GM13976 (cell line): ENCODE measurements at regions of chr7 and their contacts with region 1.

Region 1: DNA sequence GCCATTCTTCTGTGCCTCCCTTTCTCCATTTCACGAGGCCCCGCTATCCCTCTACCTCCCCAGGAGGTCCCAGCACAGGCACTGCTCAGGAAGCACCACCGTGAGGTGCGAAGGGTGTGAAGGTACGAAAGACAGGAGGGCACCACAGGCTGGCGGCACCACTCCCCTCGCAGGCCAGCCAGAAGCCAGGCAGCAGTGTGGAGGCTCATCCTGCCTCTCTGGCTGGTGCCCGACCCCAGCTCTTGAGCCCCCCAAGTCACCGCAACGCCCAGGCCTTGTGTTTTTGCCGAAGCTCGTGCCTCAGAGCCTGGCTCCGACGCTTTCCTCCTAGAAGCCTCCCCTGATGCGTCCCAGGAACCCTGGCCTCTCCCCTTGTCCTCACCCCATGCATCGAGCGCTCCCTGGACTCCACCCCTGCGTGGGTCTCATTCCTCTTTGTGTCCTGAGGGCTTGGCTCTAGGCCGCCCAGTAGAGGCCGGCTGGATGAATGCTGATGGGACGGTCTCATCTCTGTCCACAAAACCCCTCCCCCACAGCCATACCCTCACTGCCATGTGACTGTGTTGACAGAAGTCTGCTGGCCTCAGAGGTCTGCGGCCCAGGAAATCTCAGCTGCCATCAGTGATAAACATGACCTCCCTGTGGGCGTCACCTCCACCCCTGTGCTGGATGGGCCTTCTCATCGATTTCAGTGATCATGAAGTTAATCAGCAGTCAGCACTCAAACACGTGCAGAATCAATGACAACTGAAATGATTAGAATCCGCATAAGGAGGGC is 19.3 kb downstream of the BRI3 start:
- DNase-seq: no peak
- CTCF ChIP-seq: no peak

Region 2: DNA sequence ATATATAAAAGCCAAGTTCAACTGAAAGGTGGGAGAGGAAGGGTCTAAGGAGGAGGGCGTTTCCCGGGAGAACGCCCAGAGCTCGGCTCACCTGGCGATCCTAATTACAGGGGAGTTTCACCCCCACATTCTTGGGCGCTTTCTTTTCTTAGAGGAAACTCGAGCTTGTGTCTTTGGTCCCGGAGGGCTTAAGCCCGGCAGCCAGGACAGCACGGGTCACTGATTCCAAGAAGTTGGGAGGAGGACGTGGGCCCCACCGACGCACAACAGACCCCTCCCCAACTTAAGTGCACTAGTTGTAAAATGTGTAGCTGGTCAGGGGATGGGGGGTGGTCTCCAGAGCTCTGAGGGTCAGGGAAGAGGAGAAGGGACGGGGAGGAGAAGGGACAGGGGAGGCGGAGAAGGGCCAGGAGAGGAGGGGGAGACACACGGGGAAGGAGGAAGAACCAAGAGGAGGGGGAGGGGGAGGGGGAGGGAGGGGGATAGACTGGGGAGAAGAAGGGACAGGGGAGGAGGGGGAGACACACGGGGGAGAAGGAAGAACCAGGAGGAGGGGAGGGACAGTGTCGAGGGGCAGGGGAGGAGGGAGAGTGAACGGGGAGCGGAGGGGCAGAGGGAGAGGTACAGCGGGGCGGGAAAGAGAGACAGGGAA is 99.2 kb after region 1 on chr7:
- in situ Hi-C with region 1: loop called (anchors 10 kb)
- DNase-seq: peak; percentile 51
- CTCF ChIP-seq: no peak